ENCODE measurements at regions of chr22 and their contacts with region 1.

Region 1: GRCh38 chr22:50030297-50031188 is 18.0 kb upstream of the IL17REL start:
- DNase-seq: peak; percentile 86 to 91
- H3K4me3 ChIP-seq: peak overlapping the region in 1 of 4 donors; percentile 24
- H3K27ac ChIP-seq: peak overlapping the region in 1 of 5 donors; percentile 51
- H3K4me1 ChIP-seq: peaks cover 6 to 29% (median 23%) of the 10 kb centered on the region in 4 donors
- H3K27me3 ChIP-seq: peaks cover 0 to 85% (median 17%) of the 10 kb centered on the region in 3 donors
- CTCF ChIP-seq: peak in 5 of 7 experiments; percentile 85 to 96 (median 89)
- EP300 ChIP-seq: no peak
- POLR2A ChIP-seq: no peak

Region 2: GRCh38 chr22:49929208-49930136 is 101.1 kb before region 1 on chr22:
- intact Hi-C with region 1: loop called (anchors 2 kb)
- DNase-seq: peak; percentile 81 to 87
- H3K4me3 ChIP-seq: peak overlapping the region in 3 of 4 donors; percentile 20 to 30 (median 26)
- H3K27ac ChIP-seq: peak overlapping the region in 1 of 5 donors; percentile 98
- H3K4me1 ChIP-seq: peaks cover 44 to 59% (median 49%) of the 10 kb centered on the region in 4 donors
- H3K27me3 ChIP-seq: peaks cover 0 to 11% (median 8%) of the 10 kb centered on the region in 3 donors
- CTCF ChIP-seq: peak in 3 of 7 experiments; percentile 86 to 99 (median 89)
- EP300 ChIP-seq: no peak
- POLR2A ChIP-seq: no peak

Region 3: DNA sequence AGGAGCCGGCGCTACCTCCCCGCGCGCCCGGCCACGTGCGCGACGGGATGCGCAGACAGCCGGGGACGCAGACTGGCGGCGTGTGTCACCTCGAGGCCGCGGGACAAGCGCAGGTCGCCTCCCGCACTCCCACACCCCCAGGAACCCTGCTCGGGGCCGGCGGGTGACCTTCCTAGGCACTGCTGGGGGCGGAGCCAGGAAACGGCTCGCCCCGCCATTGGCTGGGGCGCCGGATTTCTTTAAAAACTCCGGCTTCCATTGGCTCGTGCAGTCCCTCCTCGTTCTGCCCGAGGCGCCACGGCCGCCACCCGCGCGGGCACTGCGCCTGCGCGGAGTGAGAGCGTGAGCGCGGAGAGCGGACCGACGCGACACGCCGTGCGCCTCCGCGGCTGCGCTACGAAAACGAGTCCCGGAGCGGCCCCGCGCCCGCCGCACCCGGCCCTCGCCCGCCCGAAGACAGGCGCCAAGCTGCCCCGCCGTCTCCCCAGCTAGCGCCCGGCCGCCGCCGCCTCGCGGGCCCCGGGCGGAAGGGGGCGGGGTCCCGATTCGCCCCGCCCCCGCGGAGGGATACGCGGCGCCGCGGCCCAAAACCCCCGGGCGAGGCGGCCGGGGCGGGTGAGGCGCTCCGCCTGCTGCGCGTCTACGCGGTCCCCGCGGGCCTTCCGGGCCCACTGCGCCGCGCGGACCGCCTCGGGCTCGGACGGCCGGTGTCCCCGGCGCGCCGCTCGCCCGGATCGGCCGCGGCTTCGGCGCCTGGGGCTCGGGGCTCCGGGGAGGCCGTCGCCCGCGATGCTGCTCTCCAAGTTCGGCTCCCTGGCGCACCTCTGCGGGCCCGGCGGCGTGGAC is 70.2 kb before region 1 on chr22 and contains the start of gene PIM3:
- intact Hi-C with region 1: no loop called
- DNase-seq: peak; percentile 97 to 98
- H3K4me3 ChIP-seq: peak within 1 kb of the TSS; percentile 81 to 99 (median 88)
- H3K27ac ChIP-seq: peak within 1 kb of the TSS; percentile 94 to 98 (median 98)
- H3K4me1 ChIP-seq: peaks cover 37 to 73% (median 69%) of the 10 kb centered on the region in 4 donors
- H3K27me3 ChIP-seq: no peaks in the 10 kb centered on the region
- CTCF ChIP-seq: no peak
- EP300 ChIP-seq: no peak
- POLR2A ChIP-seq: peak in 2 of 4 donors; percentile 47 to 89
- total RNA-seq, gene PIM3: 51.9 to 802 (median 298) TPM

Measured in stomach (tissue), 19 donors.